ENCODE measurements at regions of chr7 and their contacts with region 1.

Region 1: DNA sequence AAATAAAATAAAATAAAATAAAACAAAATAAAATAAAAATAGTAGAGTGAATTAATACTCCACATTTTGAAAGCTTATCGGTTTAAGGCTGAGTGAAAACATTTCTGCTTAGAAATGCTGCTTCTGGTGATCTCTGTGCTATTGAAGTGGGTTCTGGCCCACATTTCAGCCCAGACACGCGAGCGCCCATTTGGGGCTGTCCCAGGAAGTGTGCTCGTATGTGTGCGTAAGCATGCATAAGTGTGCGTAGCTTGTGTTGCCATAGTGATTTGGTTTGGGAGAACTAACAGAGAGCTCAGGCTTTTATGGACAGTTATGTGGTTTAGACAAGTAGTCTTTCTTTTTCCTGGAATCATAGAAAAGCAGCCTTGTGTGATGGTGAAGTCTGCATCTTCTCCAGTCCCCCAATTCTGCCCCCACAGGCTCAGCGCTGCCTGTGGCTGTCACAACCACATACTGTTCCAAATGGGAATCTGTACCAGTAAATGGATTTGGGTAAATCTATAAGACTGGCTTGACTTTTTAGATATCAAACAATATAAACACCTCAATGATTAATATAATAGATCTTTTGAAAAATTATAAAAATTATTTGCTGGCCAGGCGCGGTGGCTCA is 29.8 kb upstream of the PURB start:
- DNase-seq: peak in 30 of 35 experiments; percentile 2 to 88 (median 63)
- ATAC-seq: peak; percentile 82 to 96 (median 92)
- H3K4me3 ChIP-seq: peak overlapping the region in 1 of 2 donors; percentile 20
- H3K4me3 Mint-ChIP-seq: peak overlapping the region in 1 of 3 donors; percentile 13
- H3K27ac ChIP-seq: no peak overlapping the region
- H3K27ac Mint-ChIP-seq: peak overlapping the region; percentile 53 to 83
- H3K4me1 ChIP-seq: peaks cover 3 to 10% of the 10 kb centered on the region in 2 experiments
- H3K4me1 Mint-ChIP-seq: peaks cover 0 to 11% (median 11%) of the 10 kb centered on the region in 3 donors
- H3K27me3 ChIP-seq: no peaks in the 10 kb centered on the region
- H3K27me3 Mint-ChIP-seq: no peaks in the 10 kb centered on the region

Region 2: GRCh38 chr7:43260980-43261878 is 1653.9 kb before region 1 on chr7:
- CTCF ChIA-PET with region 1: no interaction called
- POLR2A ChIA-PET with region 1: interaction called in 1 of 2 experiments, 10 read pairs
- DNase-seq: peak in 34 of 35 experiments; percentile 1 to 71 (median 33)
- ATAC-seq: peak in 1 of 4 experiments; percentile 45
- H3K4me3 ChIP-seq: no peak overlapping the region
- H3K4me3 Mint-ChIP-seq: no peak overlapping the region
- H3K27ac ChIP-seq: no peak overlapping the region
- H3K27ac Mint-ChIP-seq: no peak overlapping the region
- H3K4me1 ChIP-seq: no peaks in the 10 kb centered on the region
- H3K4me1 Mint-ChIP-seq: no peaks in the 10 kb centered on the region
- H3K27me3 ChIP-seq: peaks cover 0 to 3% of the 10 kb centered on the region in 2 experiments
- H3K27me3 Mint-ChIP-seq: peaks cover 14 to 17% of the 10 kb centered on the region in 2 donors

Region 3: GRCh38 chr7:44867073-44867995 is 47.8 kb before region 1 on chr7:
- CTCF ChIA-PET with region 1: interaction called in 1 of 2 experiments, 3 read pairs
- POLR2A ChIA-PET with region 1: interaction called in 1 of 2 experiments, 11 read pairs
- DNase-seq: no peak
- ATAC-seq: no peak
- H3K4me3 ChIP-seq: no peak overlapping the region
- H3K4me3 Mint-ChIP-seq: no peak overlapping the region
- H3K27ac ChIP-seq: no peak overlapping the region
- H3K27ac Mint-ChIP-seq: no peak overlapping the region
- H3K4me1 ChIP-seq: no peaks in the 10 kb centered on the region
- H3K4me1 Mint-ChIP-seq: peaks cover 0 to 4% (median 3%) of the 10 kb centered on the region in 3 donors
- H3K27me3 ChIP-seq: peaks cover 0 to 7% of the 10 kb centered on the region in 2 experiments
- H3K27me3 Mint-ChIP-seq: no peaks in the 10 kb centered on the region

Region 4: GRCh38 chr7:45007571-45008328 is 92.7 kb after region 1 on chr7:
- CTCF ChIA-PET with region 1: interaction called in 1 of 2 experiments, 10 read pairs
- POLR2A ChIA-PET with region 1: no interaction called
- DNase-seq: no peak
- ATAC-seq: no peak
- H3K4me3 ChIP-seq: no peak overlapping the region
- H3K4me3 Mint-ChIP-seq: no peak overlapping the region
- H3K27ac ChIP-seq: no peak overlapping the region
- H3K27ac Mint-ChIP-seq: peak overlapping the region; percentile 22 to 55
- H3K4me1 ChIP-seq: peaks cover 2 to 21% of the 10 kb centered on the region in 2 experiments
- H3K4me1 Mint-ChIP-seq: peaks cover 49 to 60% (median 55%) of the 10 kb centered on the region in 3 donors
- H3K27me3 ChIP-seq: no peaks in the 10 kb centered on the region
- H3K27me3 Mint-ChIP-seq: no peaks in the 10 kb centered on the region

Region 5: DNA sequence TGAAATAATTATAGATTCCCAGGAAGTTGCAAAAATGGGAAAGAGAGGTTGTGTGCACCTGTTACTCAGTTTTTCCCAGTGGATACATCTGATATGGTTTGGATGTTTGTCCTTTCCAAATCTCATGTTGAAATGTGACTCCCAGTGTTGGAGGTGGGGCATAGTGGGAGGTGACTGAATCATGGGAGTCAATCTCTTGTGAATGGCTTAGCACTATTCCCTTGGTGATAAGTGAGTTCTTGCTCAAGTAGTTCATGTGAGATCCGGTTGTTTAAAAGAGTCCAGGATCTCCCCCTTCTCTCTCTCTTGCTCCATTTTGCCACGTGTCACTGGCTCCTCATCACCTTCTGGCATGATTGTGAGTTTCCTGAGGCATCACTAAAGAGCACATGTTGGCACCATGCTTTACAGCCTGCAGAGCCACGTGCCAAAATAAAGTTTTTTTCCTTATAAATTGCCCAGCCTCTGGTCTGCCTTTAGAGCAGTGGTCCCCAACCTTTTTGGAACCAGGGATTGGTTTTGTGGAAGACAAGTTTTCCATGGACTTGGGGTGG is 391.7 kb after region 1 on chr7:
- CTCF ChIA-PET with region 1: no interaction called
- POLR2A ChIA-PET with region 1: no interaction called
- DNase-seq: no peak
- ATAC-seq: no peak
- H3K4me3 ChIP-seq: no peak overlapping the region
- H3K4me3 Mint-ChIP-seq: no peak overlapping the region
- H3K27ac ChIP-seq: no peak overlapping the region
- H3K27ac Mint-ChIP-seq: no peak overlapping the region
- H3K4me1 ChIP-seq: no peaks in the 10 kb centered on the region
- H3K4me1 Mint-ChIP-seq: no peaks in the 10 kb centered on the region
- H3K27me3 ChIP-seq: peaks cover 0 to 8% of the 10 kb centered on the region in 2 experiments
- H3K27me3 Mint-ChIP-seq: peaks cover 11 to 18% of the 10 kb centered on the region in 2 donors

Measured in T-cell (primary cell).